Transverse colon (tissue), 4 donors: ENCODE measurements at regions of chr7 and their contacts with region 1.

Region 1: GRCh38 chr7:3897438-3898385 is 596.7 kb downstream of the SDK1 start:
- DNase-seq: peak; percentile 34
- H3K4me3 ChIP-seq: no peak overlapping the region
- H3K27ac ChIP-seq: no peak overlapping the region
- H3K4me1 ChIP-seq: no peaks in the 10 kb centered on the region
- H3K27me3 ChIP-seq: no peaks in the 10 kb centered on the region
- CTCF ChIP-seq: peak; percentile 76 to 82 (median 81)
- EP300 ChIP-seq: no peak
- POLR2A ChIP-seq: no peak

Region 2: GRCh38 chr7:2863461-2864066 is 1034.1 kb before region 1 on chr7:
- in situ Hi-C with region 1: loop called in 2 of 4 experiments (anchors 25 kb)
- intact Hi-C with region 1: no loop called
- DNase-seq: peak; percentile 72
- H3K4me3 ChIP-seq: no peak overlapping the region
- H3K27ac ChIP-seq: peak overlapping the region; percentile 67 to 87 (median 78)
- H3K4me1 ChIP-seq: peaks cover 6 to 21% (median 9%) of the 10 kb centered on the region in 4 donors
- H3K27me3 ChIP-seq: no peaks in the 10 kb centered on the region
- CTCF ChIP-seq: no peak
- EP300 ChIP-seq: no peak
- POLR2A ChIP-seq: peak; percentile 31

Region 3: GRCh38 chr7:3300651-3301378 is 596.9 kb before region 1 on chr7 and contains the start of gene SDK1:
- in situ Hi-C with region 1: loop called in 1 of 4 experiments (anchors 25 kb)
- intact Hi-C with region 1: loop called (anchors 5 kb)
- DNase-seq: peak; percentile 92
- H3K4me3 ChIP-seq: peak within 1 kb of the TSS; percentile 32 to 74 (median 54)
- H3K27ac ChIP-seq: peak within 1 kb of the TSS; percentile 62 to 82 (median 63)
- H3K4me1 ChIP-seq: peaks cover 6 to 18% (median 12%) of the 10 kb centered on the region in 4 donors
- H3K27me3 ChIP-seq: peaks cover 21% of the 10 kb centered on the region
- CTCF ChIP-seq: peak; percentile 42 to 95 (median 85)
- EP300 ChIP-seq: no peak
- POLR2A ChIP-seq: no peak
- total RNA-seq, gene SDK1: 4.0 to 8.6 (median 5.4) TPM

Region 4: GRCh38 chr7:3760651-3761050 is 137.1 kb before region 1 on chr7:
- in situ Hi-C with region 1: no loop called
- intact Hi-C with region 1: no loop called
- DNase-seq: no peak
- H3K4me3 ChIP-seq: no peak overlapping the region
- H3K27ac ChIP-seq: no peak overlapping the region
- H3K4me1 ChIP-seq: no peaks in the 10 kb centered on the region
- H3K27me3 ChIP-seq: no peaks in the 10 kb centered on the region
- CTCF ChIP-seq: no peak
- EP300 ChIP-seq: no peak
- POLR2A ChIP-seq: no peak

Region 5: DNA sequence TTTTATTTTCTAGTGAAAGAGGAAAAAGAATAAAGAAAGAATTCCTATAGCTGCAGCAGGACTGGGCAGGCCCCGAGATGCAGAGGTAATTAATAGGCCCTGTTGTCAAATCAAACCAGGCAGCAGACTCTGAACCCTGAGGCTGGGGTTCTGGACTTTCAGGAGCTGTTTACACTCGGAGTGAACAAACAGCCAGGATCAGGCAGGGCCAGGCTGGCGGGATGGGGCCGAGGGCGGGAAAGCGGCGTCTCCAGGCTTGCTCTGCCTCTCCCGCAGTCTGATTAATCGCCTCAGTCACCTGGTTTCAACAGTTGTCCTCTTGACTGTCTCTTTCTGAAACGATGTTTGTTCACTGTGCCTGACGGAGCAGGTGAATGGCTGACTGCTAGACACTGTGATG is 109.0 kb after region 1 on chr7:
- in situ Hi-C with region 1: no loop called
- intact Hi-C with region 1: no loop called
- DNase-seq: no peak
- H3K4me3 ChIP-seq: no peak overlapping the region
- H3K27ac ChIP-seq: no peak overlapping the region
- H3K4me1 ChIP-seq: no peaks in the 10 kb centered on the region
- H3K27me3 ChIP-seq: no peaks in the 10 kb centered on the region
- CTCF ChIP-seq: no peak
- EP300 ChIP-seq: no peak
- POLR2A ChIP-seq: no peak

Region 6: DNA sequence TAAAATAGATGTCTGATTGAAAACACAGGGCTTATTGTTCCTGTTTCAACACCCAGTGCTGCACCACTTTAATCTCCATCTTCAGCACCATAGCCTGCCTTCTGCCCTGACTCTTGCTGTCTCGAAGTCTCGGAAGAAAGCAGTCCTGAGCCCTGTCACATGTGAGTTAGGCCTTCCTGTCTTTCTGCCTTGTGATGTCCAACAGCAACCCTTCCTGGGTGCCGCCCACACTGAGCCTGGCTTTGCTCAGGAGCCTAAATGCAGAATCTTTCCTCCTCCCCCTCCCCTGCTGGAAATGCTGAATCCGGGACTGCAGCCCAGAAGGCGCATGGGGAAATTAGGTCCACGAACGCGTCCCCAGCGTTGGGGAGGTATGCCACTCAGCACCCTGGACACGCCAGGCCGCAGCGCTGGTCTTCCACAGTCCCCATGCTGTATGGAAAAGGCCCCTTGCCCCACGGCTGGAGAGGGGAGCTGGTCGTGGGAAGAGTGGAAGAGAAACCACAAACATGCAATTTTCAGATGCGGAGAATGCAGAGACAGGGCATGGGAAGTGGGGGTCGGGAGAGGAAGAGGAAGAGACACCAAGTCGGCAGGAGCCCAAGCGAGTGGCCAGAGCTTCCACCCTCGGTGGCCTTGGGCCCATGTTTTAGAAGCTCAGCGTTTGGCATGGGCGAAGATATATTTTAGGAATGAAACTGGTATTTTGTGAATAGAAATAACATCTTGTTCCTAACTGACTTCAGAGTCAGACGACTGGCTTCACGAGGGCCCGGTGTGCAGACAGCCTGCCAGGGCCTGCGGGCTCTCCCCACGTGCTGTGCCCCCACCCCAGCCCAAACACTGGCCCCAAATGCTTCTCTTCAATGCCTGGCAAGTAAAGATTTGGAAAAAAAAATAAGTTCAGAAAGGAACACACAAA is 128.2 kb after region 1 on chr7:
- in situ Hi-C with region 1: no loop called
- intact Hi-C with region 1: no loop called
- DNase-seq: no peak
- H3K4me3 ChIP-seq: no peak overlapping the region
- H3K27ac ChIP-seq: no peak overlapping the region
- H3K4me1 ChIP-seq: no peaks in the 10 kb centered on the region
- H3K27me3 ChIP-seq: no peaks in the 10 kb centered on the region
- CTCF ChIP-seq: no peak
- EP300 ChIP-seq: no peak
- POLR2A ChIP-seq: no peak